T-cell (primary cell): ENCODE measurements at regions of chr1 and their contacts with region 1.

Region 1: GRCh38 chr1:203273206-203273868 is 32.0 kb upstream of the BTG2 start:
- DNase-seq: peak; percentile 74 to 95 (median 88)
- ATAC-seq: peak; percentile 69 to 73 (median 72)
- H3K4me3 ChIP-seq: peak overlapping the region; percentile 16 to 60
- H3K4me3 Mint-ChIP-seq: peak overlapping the region; percentile 67 to 78 (median 72)
- H3K27ac ChIP-seq: peak overlapping the region; percentile 43
- H3K27ac Mint-ChIP-seq: peak overlapping the region; percentile 82 to 86
- H3K4me1 ChIP-seq: peaks cover 38 to 73% of the 10 kb centered on the region in 2 experiments
- H3K4me1 Mint-ChIP-seq: peaks cover 50 to 68% (median 59%) of the 10 kb centered on the region in 3 donors
- H3K27me3 ChIP-seq: no peaks in the 10 kb centered on the region
- H3K27me3 Mint-ChIP-seq: no peaks in the 10 kb centered on the region

Region 2: DNA sequence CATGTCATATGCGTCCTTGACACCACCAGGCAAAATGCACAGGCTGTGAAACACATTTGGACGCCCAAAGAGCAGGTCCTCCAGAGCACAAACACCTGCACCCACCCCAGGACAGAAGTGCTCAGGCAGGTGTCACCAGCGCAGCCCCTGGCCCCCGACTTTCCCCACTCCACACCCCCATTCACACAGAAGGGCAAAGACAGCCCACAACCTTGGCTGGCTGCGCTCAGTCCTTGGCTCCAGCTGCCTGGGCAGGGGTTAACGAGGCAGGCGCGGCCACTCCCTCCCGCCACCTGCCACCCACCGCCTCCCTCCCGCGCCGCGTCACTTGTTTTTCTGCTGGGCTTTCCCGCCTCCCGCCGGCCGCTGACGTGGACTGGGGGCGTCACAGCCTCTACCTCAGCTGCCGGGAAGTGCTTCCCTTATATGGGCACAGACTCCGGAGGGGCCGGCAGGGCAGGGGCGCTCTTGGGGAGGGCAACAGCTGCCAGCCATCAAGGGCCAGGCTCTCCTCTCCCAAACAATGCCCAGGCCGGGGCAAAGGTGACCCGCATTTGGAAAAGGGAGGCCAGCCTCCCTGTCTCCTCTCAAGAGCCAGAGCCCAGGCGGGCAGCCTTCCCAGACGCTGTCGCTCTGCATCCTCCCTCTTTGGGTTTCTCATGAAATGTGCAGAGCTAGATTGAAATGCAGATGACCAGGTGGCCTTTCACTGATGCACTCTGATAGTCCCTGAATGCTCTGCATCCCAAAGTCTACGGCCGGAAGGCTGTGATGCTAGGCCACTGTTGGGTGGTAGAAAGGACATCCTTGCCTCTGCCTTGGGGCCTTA is 17.1 kb after region 1 on chr1:
- CTCF ChIA-PET with region 1: interaction called, 5 to 39 read pairs
- POLR2A ChIA-PET with region 1: interaction called, 5 to 9 read pairs
- DNase-seq: peak; percentile 91 to 99 (median 98)
- ATAC-seq: peak; percentile 67 to 73 (median 71)
- H3K4me3 ChIP-seq: peak overlapping the region; percentile 30 to 49
- H3K4me3 Mint-ChIP-seq: peak overlapping the region; percentile 77 to 80 (median 78)
- H3K27ac ChIP-seq: peak overlapping the region; percentile 99
- H3K27ac Mint-ChIP-seq: peak overlapping the region; percentile 95 to 99
- H3K4me1 ChIP-seq: peaks cover 43 to 64% of the 10 kb centered on the region in 2 experiments
- H3K4me1 Mint-ChIP-seq: peaks cover 80 to 88% (median 83%) of the 10 kb centered on the region in 3 donors
- H3K27me3 ChIP-seq: no peaks in the 10 kb centered on the region
- H3K27me3 Mint-ChIP-seq: no peaks in the 10 kb centered on the region

Region 3: GRCh38 chr1:203320591-203321272 is 47.4 kb after region 1 on chr1:
- CTCF ChIA-PET with region 1: interaction called, 8 to 47 read pairs
- POLR2A ChIA-PET with region 1: interaction called, 4 to 6 read pairs
- DNase-seq: peak; percentile 64 to 93 (median 81)
- ATAC-seq: peak; percentile 74 to 83 (median 80)
- H3K4me3 ChIP-seq: no peak overlapping the region
- H3K4me3 Mint-ChIP-seq: peak overlapping the region; percentile 55 to 71 (median 70)
- H3K27ac ChIP-seq: peak overlapping the region; percentile 100
- H3K27ac Mint-ChIP-seq: peak overlapping the region; percentile 97
- H3K4me1 ChIP-seq: peaks cover 69 to 75% of the 10 kb centered on the region in 2 experiments
- H3K4me1 Mint-ChIP-seq: peaks cover 89 to 94% (median 94%) of the 10 kb centered on the region in 3 donors
- H3K27me3 ChIP-seq: no peaks in the 10 kb centered on the region
- H3K27me3 Mint-ChIP-seq: no peaks in the 10 kb centered on the region

Region 4: DNA sequence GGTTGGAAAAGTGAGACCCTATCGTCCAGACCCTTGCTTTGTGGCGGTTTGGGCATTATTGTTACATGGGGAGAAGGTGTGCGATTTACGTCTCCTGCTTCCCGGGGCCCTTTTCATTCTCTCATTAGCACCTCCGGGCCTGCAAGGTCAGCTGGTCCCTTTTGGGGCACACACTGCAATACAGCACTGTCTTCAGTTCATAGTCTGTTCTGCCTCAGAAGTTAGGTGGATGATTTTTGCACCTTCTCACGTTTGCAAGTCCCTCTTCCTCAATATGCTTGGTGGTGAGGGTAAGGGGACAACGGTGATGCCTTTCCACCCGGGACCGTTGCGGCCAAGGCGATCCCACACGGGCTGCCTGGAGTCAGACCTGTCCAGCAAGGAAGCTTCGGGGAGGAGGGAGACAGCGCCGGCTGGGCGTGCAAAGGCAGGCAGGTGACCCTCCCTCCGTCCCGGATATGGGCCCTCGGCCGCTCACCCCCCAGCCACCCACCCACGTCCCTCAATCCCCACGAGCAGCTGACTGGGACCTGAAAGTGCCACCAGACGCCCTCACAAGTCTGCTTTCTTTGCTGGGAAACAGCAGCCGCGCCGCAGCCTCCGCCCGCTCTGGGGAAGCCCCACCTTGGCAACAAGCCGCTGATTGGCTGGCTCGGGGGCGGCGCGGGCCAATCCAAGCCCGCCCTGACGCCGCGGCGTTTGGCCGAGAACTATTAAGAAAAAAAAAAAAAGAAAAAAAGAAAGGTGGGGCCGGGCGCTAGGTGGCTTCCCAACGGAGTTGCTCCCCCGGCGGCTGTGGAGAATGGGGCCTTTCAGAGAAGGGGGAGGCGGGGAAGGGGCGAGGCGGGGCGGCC is 53.7 kb after region 1 on chr1:
- CTCF ChIA-PET with region 1: interaction called, 3 to 258 read pairs
- POLR2A ChIA-PET with region 1: interaction called, 5 to 6 read pairs
- DNase-seq: peak; percentile 83 to 97 (median 95)
- ATAC-seq: peak; percentile 76 to 84 (median 78)
- H3K4me3 ChIP-seq: peak overlapping the region; percentile 65 to 66
- H3K4me3 Mint-ChIP-seq: peak overlapping the region; percentile 70 to 82 (median 77)
- H3K27ac ChIP-seq: peak overlapping the region; percentile 100
- H3K27ac Mint-ChIP-seq: peak overlapping the region; percentile 97
- H3K4me1 ChIP-seq: peaks cover 53 to 66% of the 10 kb centered on the region in 2 experiments
- H3K4me1 Mint-ChIP-seq: peaks cover 59 to 67% (median 62%) of the 10 kb centered on the region in 3 donors
- H3K27me3 ChIP-seq: no peaks in the 10 kb centered on the region
- H3K27me3 Mint-ChIP-seq: no peaks in the 10 kb centered on the region

Region 5: DNA sequence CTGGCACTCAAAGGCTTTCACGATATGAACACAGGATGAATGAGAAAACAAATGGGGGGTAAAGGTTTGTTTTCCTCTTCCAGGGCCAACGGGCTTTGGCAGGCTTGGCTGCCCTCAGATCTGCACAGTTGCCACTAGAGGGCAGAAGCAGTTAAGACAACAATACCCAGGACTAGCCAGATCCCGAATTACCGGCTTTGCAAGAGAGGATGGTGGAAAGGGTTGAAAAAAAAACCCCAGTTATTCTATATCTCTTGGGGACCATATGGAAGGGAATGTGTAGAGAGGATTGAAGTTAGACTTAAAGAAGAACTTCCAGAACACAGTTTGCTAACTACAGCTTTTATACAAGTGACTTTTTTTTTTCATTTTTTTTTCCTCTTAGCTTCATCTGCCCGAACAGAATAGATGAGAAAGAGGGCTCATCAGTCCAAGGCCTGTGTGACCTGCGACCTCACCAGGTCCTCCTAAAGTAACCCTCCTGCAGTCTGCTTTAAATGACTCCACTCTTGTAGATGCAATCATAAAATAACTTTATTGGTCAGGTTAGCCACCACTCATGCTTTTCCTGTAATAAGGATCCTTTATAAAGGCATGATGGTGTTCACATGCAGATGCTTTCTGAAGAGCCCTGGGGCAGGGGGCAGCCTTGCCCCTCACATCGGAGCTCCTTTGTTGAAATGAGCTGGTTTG is 66.9 kb after region 1 on chr1:
- CTCF ChIA-PET with region 1: interaction called, 6 to 258 read pairs
- POLR2A ChIA-PET with region 1: interaction called in 1 of 2 experiments, 3 read pairs
- DNase-seq: peak in 34 of 35 experiments; percentile 18 to 81 (median 41)
- ATAC-seq: peak; percentile 65 to 78 (median 72)
- H3K4me3 ChIP-seq: no peak overlapping the region
- H3K4me3 Mint-ChIP-seq: no peak overlapping the region
- H3K27ac ChIP-seq: no peak overlapping the region
- H3K27ac Mint-ChIP-seq: peak overlapping the region in 1 of 2 donors; percentile 38
- H3K4me1 ChIP-seq: peaks cover 5 to 27% of the 10 kb centered on the region in 2 experiments
- H3K4me1 Mint-ChIP-seq: peaks cover 39 to 42% (median 40%) of the 10 kb centered on the region in 3 donors
- H3K27me3 ChIP-seq: peaks cover 5 to 21% of the 10 kb centered on the region in 2 experiments
- H3K27me3 Mint-ChIP-seq: peaks cover 4 to 28% of the 10 kb centered on the region in 2 donors